Activated T-helper 1 cell treated with anti-CD3 and anti-CD28 coated beads, Interleukin-12 subunit alpha, Interleukin-12 subunit beta, Interleukin-2, Interleukin-4 antibody, amounts not matched to agents 30 ng/mL and 10 ng/mL and 1 ng/mL, durations not matched to agents 14 hours and 24 hours and 36 hours (primary cell): ENCODE measurements at regions of chrX and their contacts with region 1.

Region 1: GRCh38 chrX:70454441-70455365 is 10.1 kb downstream of the DLG3 start:
- DNase-seq: peak; percentile 67
- H3K4me3 Mint-ChIP-seq: peak overlapping the region; percentile 93
- H3K27ac Mint-ChIP-seq: peak overlapping the region; percentile 96
- H3K4me1 Mint-ChIP-seq: peaks cover 38% of the 10 kb centered on the region
- H3K27me3 Mint-ChIP-seq: no peaks in the 10 kb centered on the region

Region 2: DNA sequence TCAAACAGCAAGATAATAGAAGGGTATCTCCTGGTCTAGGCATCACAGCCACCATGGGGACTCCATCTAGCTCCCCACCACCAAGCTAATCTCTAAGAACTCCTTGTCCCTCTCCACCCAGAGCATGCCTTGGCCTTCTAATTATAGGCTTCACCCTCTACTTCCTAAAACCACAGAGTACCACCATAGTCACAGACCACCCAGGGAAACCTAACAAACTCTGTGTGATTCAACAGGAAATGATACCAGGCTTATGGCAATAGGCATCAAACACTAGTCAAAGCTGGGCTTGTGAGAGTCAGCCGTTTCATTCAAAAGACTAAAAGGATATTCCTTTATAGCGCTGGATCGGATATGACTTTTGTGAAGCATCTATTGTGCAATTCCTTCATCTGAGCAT is 1042.0 kb before region 1 on chrX:
- intact Hi-C with region 1: no loop called
- DNase-seq: no peak
- H3K4me3 Mint-ChIP-seq: no peak overlapping the region
- H3K27ac Mint-ChIP-seq: no peak overlapping the region
- H3K4me1 Mint-ChIP-seq: no peaks in the 10 kb centered on the region
- H3K27me3 Mint-ChIP-seq: no peaks in the 10 kb centered on the region

Region 3: GRCh38 chrX:70433848-70434351 is 20.8 kb before region 1 on chrX:
- intact Hi-C with region 1: loop called (anchors 1 kb)
- DNase-seq: peak; percentile 64
- H3K4me3 Mint-ChIP-seq: peak overlapping the region; percentile 91
- H3K27ac Mint-ChIP-seq: peak overlapping the region; percentile 93
- H3K4me1 Mint-ChIP-seq: peaks cover 22% of the 10 kb centered on the region
- H3K27me3 Mint-ChIP-seq: peaks cover 11% of the 10 kb centered on the region

Region 4: DNA sequence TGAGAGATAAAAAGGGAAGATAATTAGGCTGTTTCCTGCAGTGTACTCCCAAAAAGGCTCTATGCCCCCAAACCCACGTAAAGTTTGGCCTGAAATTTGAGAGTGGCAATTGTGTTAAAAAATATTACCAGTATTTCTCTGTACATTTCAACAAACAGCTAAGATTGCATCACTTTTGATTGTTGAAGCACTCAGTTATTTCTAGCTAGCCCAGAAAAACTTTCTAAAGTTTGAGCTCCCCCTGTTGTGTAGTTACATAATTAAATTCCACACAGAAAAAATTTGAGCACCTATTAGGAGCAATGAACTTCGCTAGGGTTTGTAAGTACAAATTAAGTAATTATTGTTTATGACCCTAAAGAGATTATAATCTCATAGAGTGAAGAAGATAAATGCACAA is 99.4 kb after region 1 on chrX:
- intact Hi-C with region 1: loop called (anchors 1 kb)
- DNase-seq: no peak
- H3K4me3 Mint-ChIP-seq: no peak overlapping the region
- H3K27ac Mint-ChIP-seq: no peak overlapping the region
- H3K4me1 Mint-ChIP-seq: peaks cover 12% of the 10 kb centered on the region
- H3K27me3 Mint-ChIP-seq: peaks cover 10% of the 10 kb centered on the region

Region 5: GRCh38 chrX:70656304-70656703 is 201.6 kb after region 1 on chrX:
- intact Hi-C with region 1: loop called (anchors 1 kb)
- DNase-seq: no peak
- H3K4me3 Mint-ChIP-seq: peak overlapping the region; percentile 4
- H3K27ac Mint-ChIP-seq: peak overlapping the region; percentile 82
- H3K4me1 Mint-ChIP-seq: peaks cover 9% of the 10 kb centered on the region
- H3K27me3 Mint-ChIP-seq: no peaks in the 10 kb centered on the region

Region 6: DNA sequence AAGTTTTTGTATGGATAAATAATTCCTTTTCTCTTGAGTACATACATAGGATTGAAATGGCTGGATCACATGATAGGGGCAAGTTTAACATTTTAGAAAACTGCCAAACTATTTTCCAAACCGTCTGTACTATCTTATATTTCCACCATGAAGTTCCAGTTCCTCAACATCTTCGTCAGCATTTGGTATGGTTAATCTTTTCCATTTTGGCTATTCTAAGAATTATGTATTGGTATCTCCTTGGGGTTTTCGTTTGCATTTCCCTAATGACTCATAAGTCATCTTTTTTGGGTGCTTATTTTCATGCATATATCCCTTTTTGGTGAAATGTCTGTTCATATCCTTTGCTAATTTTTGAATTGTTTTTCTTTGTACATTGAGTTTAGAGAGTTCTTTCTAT is 217.6 kb after region 1 on chrX:
- intact Hi-C with region 1: loop called (anchors 1 kb)
- DNase-seq: no peak
- H3K4me3 Mint-ChIP-seq: peak overlapping the region; percentile 45
- H3K27ac Mint-ChIP-seq: peak overlapping the region; percentile 90
- H3K4me1 Mint-ChIP-seq: peaks cover 32% of the 10 kb centered on the region
- H3K27me3 Mint-ChIP-seq: no peaks in the 10 kb centered on the region

Region 7: DNA sequence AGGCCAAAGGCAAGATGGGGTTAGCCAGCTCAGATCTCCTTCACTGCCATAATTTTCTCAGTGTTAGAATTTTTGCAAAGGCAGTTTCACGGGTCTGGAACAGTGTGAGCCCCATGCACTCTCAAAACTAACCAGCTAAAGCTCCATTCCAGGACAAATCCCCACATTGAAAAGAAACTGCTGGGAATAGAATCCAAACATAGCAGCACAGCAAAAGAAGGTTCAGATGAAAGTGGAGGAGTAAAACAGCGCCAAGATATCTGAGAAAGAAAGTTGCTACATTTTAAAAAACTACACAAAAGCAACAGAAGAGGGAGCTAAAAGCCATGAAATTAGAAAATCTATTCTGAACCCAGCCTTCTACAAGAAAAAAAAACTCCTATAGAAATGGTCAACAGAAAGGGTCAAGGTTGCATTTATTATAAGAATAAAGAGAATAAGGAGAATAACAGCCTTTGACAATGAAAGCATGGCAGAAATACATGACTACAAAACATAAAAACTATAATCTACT is 515.8 kb after region 1 on chrX:
- intact Hi-C with region 1: loop called (anchors 10 kb)
- DNase-seq: no peak
- H3K4me3 Mint-ChIP-seq: no peak overlapping the region
- H3K27ac Mint-ChIP-seq: no peak overlapping the region
- H3K4me1 Mint-ChIP-seq: peaks cover 6% of the 10 kb centered on the region
- H3K27me3 Mint-ChIP-seq: peaks cover 8% of the 10 kb centered on the region